ENCODE measurements at regions of chr11 and their contacts with region 1.

Region 1: GRCh38 chr11:96054870-96055705 is 131.2 kb upstream of the MTMR2 start:
- DNase-seq: peak; percentile 49
- H3K4me3 Mint-ChIP-seq: no peak overlapping the region
- H3K27ac Mint-ChIP-seq: peak overlapping the region; percentile 61
- H3K4me1 Mint-ChIP-seq: peaks cover 13% of the 10 kb centered on the region
- H3K27me3 Mint-ChIP-seq: no peaks in the 10 kb centered on the region
- CTCF ChIP-seq: peak; percentile 47

Region 2: GRCh38 chr11:95835768-95836488 is 219.2 kb before region 1 on chr11:
- CTCF ChIA-PET with region 1: interaction called, 11 read pairs
- POLR2A ChIA-PET with region 1: interaction called, 3 read pairs
- intact Hi-C with region 1: no loop called
- DNase-seq: peak; percentile 89
- H3K4me3 Mint-ChIP-seq: no peak overlapping the region
- H3K27ac Mint-ChIP-seq: peak overlapping the region; percentile 17
- H3K4me1 Mint-ChIP-seq: peaks cover 11% of the 10 kb centered on the region
- H3K27me3 Mint-ChIP-seq: no peaks in the 10 kb centered on the region
- CTCF ChIP-seq: peak; percentile 72

Region 3: DNA sequence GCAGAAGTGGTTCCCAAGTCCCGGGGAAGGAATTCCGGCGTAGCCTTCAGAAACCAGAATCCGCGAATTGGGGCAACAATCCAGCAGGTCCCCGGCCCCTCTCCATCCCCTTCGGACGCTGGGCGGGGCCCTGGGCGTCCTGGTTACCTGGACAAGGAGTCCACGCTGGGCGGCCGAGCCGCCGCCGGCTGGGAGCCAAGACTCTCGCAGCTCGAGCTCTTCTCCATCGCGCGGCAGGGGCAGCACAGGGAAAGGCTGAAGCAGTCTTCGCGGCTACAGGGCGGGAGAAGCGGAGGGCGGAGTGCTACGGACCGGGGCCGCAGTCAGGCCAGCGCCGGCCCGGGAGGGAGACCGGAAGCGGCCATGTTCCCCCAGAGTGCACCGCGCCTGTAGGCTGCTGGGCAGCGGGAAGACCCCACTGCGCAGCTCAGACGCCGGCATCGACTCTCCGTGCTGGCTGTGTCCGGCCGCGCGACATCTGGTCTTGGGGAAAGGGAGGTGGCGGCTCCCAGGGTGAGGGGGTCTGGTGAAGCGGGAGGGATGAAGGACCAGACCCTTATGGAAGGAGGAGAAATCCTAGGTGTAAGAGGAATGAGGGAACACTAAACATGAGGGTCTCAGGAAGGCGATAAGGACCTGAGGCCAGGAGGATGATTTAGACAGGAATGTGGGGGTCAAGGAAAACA is 131.2 kb before region 1 on chr11 and contains the start of gene MTMR2:
- CTCF ChIA-PET with region 1: no interaction called
- POLR2A ChIA-PET with region 1: no interaction called
- intact Hi-C with region 1: loop called (anchors 5 kb)
- DNase-seq: peak; percentile 64
- H3K4me3 Mint-ChIP-seq: peak within 1 kb of the TSS; percentile 84
- H3K27ac Mint-ChIP-seq: peak within 1 kb of the TSS; percentile 95
- H3K4me1 Mint-ChIP-seq: peaks cover 21% of the 10 kb centered on the region
- H3K27me3 Mint-ChIP-seq: no peaks in the 10 kb centered on the region
- CTCF ChIP-seq: no peak
- total RNA-seq, gene MTMR2: 49.8 and 51.9 TPM in 2 replicates

Region 4: DNA sequence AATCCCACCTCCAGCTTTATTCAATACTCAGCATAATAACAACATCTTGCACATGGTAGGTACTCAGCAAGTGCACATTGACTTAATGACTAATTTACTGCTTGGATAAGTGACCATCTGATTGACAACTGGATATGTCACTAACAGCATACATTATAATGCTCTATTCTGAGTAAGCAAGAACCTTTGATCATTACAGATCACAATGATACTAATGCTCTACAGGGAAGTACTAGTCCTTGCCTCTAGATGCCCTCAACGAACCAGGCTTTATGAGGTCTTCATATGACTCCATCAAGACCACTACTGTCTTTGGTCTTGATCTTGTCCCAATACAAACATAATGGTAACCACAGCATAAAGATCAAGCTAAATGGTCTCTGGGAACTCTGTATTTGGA is 36.4 kb after region 1 on chr11:
- CTCF ChIA-PET with region 1: interaction called, 10 read pairs
- POLR2A ChIA-PET with region 1: no interaction called
- intact Hi-C with region 1: no loop called
- DNase-seq: peak; percentile 24
- H3K4me3 Mint-ChIP-seq: no peak overlapping the region
- H3K27ac Mint-ChIP-seq: no peak overlapping the region
- H3K4me1 Mint-ChIP-seq: no peaks in the 10 kb centered on the region
- H3K27me3 Mint-ChIP-seq: no peaks in the 10 kb centered on the region
- CTCF ChIP-seq: no peak

Region 5: GRCh38 chr11:96228473-96228891 is 173.4 kb after region 1 on chr11:
- CTCF ChIA-PET with region 1: interaction called, 4 read pairs
- POLR2A ChIA-PET with region 1: interaction called, 4 read pairs
- intact Hi-C with region 1: loop called (anchors 5 kb)
- DNase-seq: peak; percentile 92
- H3K4me3 Mint-ChIP-seq: no peak overlapping the region
- H3K27ac Mint-ChIP-seq: peak overlapping the region; percentile 97
- H3K4me1 Mint-ChIP-seq: peaks cover 48% of the 10 kb centered on the region
- H3K27me3 Mint-ChIP-seq: no peaks in the 10 kb centered on the region
- CTCF ChIP-seq: no peak

Region 6: DNA sequence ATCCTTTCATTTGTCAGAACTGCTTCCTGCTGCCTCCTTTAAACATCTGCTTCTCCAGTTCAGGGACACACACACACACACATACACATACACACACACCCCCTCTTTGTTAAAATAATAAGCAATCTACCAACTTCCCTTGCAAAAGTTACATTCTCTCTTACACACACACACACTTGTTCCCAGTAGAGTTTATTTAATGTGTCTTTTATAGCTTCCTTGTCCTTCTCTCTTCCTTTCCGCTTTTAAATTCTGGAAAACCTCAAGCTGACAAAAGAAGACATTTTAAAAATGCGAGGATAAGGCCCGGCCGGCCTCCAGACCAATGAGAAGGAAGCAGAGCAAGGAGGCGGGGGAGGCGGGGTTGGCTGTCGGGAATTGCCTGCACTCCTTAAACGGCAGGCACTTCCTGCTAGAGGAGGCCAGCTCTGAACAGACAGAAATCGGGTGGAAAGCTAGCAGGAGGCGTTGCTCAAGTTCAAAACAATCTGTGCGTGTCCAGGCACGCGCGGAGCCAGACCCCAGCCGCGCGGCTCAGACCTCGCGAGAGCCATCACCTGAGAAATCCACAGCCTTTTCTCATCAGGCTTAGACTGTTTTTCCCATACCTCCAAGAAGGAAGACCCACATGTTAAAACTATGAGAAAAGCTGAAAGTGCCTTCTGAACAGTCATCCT is 188.0 kb after region 1 on chr11:
- CTCF ChIA-PET with region 1: interaction called, 13 read pairs
- POLR2A ChIA-PET with region 1: interaction called, 5 read pairs
- intact Hi-C with region 1: loop called (anchors 2 kb)
- DNase-seq: peak; percentile 97
- H3K4me3 Mint-ChIP-seq: peak overlapping the region; percentile 72
- H3K27ac Mint-ChIP-seq: peak overlapping the region; percentile 83
- H3K4me1 Mint-ChIP-seq: peaks cover 32% of the 10 kb centered on the region
- H3K27me3 Mint-ChIP-seq: no peaks in the 10 kb centered on the region
- CTCF ChIP-seq: no peak

Region 7: DNA sequence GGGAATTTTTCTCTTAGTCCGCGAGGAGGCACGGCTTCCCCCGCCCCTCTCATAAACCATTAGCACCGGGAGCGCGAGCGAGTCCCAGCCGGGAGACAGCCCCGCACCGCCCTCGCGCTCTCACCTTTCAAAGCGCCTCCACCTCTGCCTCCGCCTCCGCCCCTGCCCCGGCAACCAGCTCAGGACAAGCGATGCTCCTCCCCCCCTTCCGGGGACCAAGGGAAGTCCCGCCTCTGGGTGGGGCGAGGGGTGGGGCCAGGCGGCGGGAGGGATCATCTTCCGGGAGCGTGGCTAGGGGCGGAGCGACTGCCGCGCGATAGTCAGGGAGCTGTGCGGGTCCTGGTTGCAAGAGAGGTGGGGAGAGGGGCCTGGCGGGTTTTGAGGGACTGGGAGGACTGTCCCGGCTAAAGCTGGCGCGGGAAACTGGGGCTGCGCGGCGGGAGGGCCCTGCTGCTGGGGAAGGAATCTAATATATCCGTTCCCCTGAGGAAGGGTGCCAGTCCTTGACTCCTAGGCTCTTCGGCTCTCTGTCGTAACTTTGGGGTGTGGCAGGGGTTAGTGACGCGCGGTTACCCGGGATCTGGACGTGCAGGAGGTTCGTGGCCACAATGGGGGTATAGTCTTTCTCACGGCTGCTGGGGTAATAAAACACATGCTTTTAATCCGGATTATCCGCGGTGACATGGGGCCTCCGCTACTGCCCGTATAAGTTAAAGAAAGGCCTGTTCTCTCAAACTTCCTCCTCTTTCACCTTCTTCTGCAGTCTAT is 334.8 kb after region 1 on chr11 and contains the starts of genes CCDC82 and JRKL:
- CTCF ChIA-PET with region 1: interaction called, 21 read pairs
- POLR2A ChIA-PET with region 1: interaction called, 8 read pairs
- intact Hi-C with region 1: loop called (anchors 2 kb)
- DNase-seq: peak; percentile 98
- H3K4me3 Mint-ChIP-seq: peak within 1 kb of the TSS; percentile 77
- H3K27ac Mint-ChIP-seq: peak within 1 kb of the TSS; percentile 93
- H3K4me1 Mint-ChIP-seq: peaks cover 11% of the 10 kb centered on the region
- H3K27me3 Mint-ChIP-seq: no peaks in the 10 kb centered on the region
- CTCF ChIP-seq: no peak
- total RNA-seq, gene CCDC82: 15.8 and 21.4 TPM in 2 replicates
- total RNA-seq, gene JRKL: 11.5 and 16.3 TPM in 2 replicates